Activated T-helper 1 cell treated with anti-CD3 and anti-CD28 coated beads, Interleukin-12 subunit alpha, Interleukin-12 subunit beta, Interleukin-2, Interleukin-4 antibody, amounts not matched to agents 30 ng/mL and 10 ng/mL and 1 ng/mL, durations not matched to agents 14 hours and 24 hours and 36 hours (primary cell): ENCODE measurements at regions of chr22 and their contacts with region 1.

Region 1: DNA sequence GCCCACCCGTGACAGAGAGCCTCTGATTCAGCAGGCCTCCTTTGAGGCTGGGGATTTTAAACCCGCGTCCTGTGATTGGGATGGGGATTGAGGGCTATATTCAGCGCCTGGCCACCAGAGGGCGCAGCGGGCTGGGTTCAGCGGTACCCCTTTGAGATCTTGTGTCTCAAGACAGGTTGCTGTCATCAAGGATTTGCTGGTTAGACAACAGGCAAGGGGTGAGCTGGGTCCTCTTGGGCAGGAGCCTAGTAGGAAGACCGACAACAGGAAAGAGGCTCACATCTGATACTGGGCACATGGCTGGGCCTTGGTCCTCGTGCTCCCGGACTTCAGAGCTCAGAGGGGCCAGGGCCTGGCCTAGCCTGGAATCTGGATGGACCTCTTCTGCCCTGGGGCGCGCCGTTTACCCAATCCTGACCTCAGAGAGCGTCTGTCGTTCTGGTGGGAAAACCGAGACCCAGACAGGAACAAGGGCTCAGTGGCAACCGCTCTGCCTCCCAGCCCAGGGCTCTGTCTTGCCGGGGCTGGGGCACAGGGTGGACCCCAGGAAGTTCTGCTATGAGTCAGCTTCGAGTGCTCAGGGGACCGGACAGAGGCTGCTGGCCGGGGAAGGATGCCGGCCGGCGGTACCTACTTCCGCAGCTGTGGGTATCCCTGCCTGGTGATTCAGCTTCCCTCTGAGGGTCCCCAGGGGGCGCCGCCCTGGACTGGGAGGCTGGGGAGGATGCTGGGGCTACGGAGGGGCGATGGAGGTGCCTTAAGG is 929 bp upstream of the SLC35E4 start:
- DNase-seq: peak; percentile 82
- H3K4me3 Mint-ChIP-seq: peak overlapping the region; percentile 85
- H3K27ac Mint-ChIP-seq: peak overlapping the region; percentile 92
- H3K4me1 Mint-ChIP-seq: peaks cover 29% of the 10 kb centered on the region
- H3K27me3 Mint-ChIP-seq: no peaks in the 10 kb centered on the region

Region 2: GRCh38 chr22:30609260-30610185 is 25.1 kb before region 1 on chr22:
- intact Hi-C with region 1: loop called (anchors 1 kb)
- DNase-seq: peak; percentile 52
- H3K4me3 Mint-ChIP-seq: peak overlapping the region; percentile 38
- H3K27ac Mint-ChIP-seq: peak overlapping the region; percentile 66
- H3K4me1 Mint-ChIP-seq: peaks cover 61% of the 10 kb centered on the region
- H3K27me3 Mint-ChIP-seq: no peaks in the 10 kb centered on the region

Region 3: DNA sequence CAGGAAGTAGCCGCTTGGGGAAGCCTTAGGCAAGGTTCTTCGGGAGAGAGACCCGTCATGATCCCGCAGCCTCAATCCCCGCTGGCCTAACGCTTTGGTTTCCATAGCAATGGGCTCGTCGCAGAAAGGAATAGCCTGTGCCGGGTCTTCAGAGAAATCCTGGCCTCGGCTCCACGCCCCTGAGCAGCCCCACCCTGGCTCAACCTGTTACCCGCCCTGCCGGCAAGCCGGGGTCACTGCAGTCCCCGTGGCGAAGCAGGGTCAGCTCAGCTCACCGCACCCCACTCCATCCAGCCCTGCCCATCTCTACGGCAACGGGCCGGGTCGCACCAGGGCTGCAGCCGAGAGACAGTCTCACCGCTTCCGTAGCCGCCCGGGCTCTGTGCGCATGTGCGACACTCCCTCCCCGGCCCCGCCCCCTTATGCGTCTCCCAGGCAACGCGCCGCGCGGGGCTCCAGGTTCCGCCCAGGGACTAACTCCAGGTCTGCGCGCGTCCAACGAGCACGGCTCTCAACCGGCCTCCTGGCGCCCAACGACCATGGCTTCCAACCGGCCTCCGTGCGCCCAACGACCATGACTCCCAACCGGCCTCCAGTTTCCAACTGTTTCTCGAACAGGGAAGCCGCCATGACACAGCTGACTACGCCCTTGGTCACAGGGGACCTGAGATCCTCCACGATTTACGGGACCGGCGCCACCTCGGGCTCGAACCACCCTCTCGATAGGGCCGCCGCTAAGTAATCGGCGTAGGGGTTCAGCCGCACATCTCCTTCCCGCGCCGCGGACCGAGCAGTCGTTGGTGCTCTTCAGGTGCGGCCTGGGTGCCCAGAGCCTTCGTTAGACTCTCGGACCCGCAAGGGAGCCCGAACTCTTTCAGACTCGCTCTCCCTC is 33.1 kb after region 1 on chr22 and contains the start of gene DUSP18:
- intact Hi-C with region 1: loop called (anchors 1 kb)
- DNase-seq: peak; percentile 92
- H3K4me3 Mint-ChIP-seq: peak within 1 kb of the TSS; percentile 93
- H3K27ac Mint-ChIP-seq: peak within 1 kb of the TSS; percentile 83
- H3K4me1 Mint-ChIP-seq: peaks cover 32% of the 10 kb centered on the region
- H3K27me3 Mint-ChIP-seq: peaks cover 7% of the 10 kb centered on the region
- total RNA-seq, gene DUSP18: 9.6 and 9.8 TPM in 2 replicates

Region 4: DNA sequence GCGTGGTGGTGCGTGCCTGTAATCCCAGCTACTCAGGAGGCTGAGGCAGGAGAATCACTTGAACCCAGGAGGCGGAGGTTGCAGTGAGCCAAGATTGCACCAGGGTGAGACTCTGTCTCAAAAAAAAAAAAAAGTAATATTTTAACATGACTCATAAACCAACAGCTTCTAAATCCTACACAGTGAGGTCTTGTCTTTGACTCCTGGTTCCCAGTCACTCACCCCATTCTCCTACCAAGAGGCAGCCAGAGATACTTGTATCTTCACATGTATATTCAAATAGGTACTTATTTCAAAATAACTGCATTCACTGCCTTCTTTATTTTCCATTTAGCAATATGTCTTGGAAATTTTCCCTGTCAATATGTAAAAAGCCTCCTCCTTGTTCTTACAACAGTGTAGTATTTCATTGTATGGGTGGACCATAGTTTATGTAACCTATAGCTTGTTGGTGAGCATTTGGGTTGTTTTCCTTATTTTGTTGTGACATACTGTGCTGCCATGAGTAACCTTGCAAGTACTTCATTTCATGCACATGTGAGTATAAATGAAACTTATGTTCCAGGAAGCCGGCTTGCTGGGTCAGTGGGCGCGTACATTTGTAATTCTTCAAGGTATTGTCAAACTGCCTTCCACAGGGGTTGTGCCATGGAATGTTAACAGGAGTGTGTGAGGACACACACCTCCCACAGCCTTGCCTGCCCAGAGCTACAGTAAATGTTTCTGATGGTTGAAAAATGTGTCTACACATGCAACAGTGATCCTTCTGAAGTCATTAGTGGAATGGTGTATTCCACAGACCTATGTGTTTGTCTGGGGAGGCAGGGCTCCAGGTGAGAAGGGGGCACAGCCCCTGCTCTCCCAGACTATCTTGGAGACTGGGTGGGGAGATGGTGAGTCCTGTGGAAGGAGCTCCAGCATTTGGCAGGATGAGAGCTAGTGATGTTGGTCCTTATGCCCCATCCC is 107.9 kb after region 1 on chr22:
- intact Hi-C with region 1: loop called (anchors 1 kb)
- DNase-seq: no peak
- H3K4me3 Mint-ChIP-seq: peak overlapping the region; percentile 48
- H3K27ac Mint-ChIP-seq: peak overlapping the region; percentile 96
- H3K4me1 Mint-ChIP-seq: peaks cover 81% of the 10 kb centered on the region
- H3K27me3 Mint-ChIP-seq: no peaks in the 10 kb centered on the region

Region 5: DNA sequence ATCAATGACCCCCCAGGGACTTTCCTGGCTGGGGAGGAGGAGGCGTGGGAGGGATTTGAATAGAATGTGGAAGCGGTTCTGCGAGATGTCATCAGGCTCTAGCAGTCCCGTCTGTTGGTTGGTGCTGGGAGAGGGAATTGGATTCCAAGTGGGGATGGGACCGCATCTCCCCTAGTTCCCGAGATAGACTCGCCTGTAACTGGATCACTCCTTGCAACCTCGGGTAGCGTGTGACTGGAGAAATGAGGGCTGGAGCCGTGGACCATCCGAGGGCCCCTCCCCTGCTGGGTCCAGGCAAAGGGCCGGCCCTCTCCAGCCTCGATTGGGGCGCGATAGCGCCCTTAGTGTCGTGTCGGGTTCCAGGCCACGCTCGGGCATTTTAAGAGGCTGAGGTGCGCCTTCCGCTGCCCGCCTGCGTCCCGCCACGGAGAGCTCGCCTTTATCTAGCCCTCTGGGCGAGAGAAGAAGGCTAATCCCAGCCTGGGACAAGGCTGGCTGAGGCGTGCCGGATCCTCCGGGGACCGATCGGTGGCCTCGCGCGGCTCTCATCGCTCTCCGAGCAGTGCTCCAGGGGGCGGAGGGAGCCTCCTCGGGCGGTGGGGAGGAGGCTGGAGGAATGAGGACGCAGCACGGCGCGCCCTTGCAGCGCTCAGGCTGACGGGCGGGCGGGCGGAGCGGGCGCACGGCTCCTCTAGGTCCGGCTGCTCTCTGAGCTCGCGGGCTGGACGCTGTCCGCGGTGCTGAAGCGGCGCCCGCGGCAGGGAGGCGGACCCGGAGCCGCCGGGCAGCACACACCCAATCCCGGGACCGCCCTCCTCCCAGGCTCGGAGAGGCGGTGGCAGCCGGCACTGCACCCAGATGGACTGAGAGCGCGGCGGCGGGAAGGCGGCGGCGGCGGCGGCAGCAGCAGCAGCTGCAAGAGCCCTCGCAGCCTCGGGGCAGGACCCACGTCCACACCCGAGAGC is 167.8 kb after region 1 on chr22:
- intact Hi-C with region 1: loop called (anchors 2 kb)
- DNase-seq: peak; percentile 77
- H3K4me3 Mint-ChIP-seq: no peak overlapping the region
- H3K27ac Mint-ChIP-seq: no peak overlapping the region
- H3K4me1 Mint-ChIP-seq: no peaks in the 10 kb centered on the region
- H3K27me3 Mint-ChIP-seq: peaks cover 17% of the 10 kb centered on the region

Region 6: DNA sequence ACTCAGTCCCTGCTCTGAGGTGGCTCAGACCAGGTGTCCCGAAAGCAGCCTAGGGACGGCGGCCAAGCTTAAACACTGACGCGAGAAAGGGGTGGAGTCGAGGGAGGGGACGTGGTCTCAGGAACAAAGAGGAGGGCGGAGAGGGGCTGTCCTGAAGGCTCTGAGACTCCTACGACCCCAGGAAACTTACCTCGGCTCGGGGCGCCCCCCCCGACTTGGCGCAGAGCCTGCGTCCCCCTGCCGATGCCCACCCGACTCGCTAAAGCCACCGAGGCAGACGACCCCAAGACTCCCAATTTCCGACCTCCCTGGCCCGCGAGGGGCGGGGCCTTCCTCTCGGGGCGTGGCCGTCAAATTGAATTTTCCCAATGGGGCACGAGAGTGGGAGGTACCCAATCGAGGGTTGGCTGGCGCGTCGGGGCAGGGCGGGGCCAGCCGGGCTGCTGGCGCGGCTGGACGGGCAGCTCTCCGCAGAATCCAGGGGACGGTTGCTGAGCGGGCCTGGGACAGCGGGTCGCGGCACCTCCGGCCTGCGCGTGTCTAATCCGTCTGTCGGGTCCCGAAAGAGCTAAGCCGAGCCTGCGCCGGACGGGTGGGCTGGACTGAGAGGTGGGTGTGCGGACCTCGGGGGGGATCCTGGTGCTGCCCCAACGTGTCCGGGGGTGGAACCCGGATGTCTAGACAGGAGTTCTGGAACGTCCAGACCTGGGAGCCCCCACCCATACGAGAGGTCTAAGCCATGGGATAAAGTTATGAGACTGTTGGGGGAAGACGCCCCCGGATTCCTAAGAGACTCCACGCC is 446.4 kb after region 1 on chr22 and contains the start of gene SMTN:
- intact Hi-C with region 1: loop called (anchors 1 kb)
- DNase-seq: peak; percentile 84
- H3K4me3 Mint-ChIP-seq: peak within 1 kb of the TSS; percentile 92
- H3K27ac Mint-ChIP-seq: peak within 1 kb of the TSS; percentile 29
- H3K4me1 Mint-ChIP-seq: peaks cover 40% of the 10 kb centered on the region
- H3K27me3 Mint-ChIP-seq: no peaks in the 10 kb centered on the region
- total RNA-seq, gene SMTN: 10.2 and 13.7 TPM in 2 replicates